Activated CD8-positive, alpha-beta memory T cell treated with anti-CD3 and anti-CD28 coated beads, Interleukin-2, amount 10 ng/mL, durations not matched to agents 7 days and 5 days (primary cell): ENCODE measurements at regions of chr1 and their contacts with region 1.

Region 1: DNA sequence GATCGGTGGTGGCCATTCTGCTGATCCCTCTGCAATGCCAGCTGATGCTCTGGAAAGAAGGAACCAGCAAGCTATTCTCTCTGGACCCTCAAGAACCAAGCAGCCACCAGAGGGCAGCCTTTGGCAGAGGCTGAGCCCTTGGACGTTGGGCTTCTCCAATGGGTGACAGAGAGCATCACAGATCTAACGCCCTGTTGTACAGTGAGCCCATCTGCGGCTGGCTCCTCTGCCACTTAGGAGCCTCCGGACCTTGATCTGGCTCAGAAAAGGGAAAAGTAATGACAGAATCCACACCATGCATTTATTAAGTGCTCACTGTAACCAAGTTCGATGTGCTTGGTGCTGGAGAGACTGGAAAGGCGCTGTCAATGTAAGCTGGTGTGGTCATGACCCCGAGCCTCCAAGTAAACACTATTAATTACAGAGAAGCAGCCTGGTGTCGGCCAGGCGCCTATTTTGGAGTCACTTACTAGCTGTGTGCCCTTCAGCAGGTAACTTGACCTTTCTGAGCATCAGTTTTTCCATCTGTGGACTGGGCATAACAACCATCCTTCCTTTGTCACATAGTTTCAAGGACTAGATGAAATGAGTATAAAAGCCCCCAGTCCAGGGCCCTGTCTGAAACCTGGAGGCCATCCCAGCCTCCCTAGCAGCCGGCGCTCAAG is 34.9 kb downstream of the ECE1 start:
- DNase-seq: peak; percentile 87
- ATAC-seq: peak; percentile 79
- H3K4me3 Mint-ChIP-seq: no peak overlapping the region
- H3K27ac Mint-ChIP-seq: no peak overlapping the region
- H3K4me1 Mint-ChIP-seq: peaks cover 27% of the 10 kb centered on the region
- H3K27me3 Mint-ChIP-seq: no peaks in the 10 kb centered on the region

Region 2: DNA sequence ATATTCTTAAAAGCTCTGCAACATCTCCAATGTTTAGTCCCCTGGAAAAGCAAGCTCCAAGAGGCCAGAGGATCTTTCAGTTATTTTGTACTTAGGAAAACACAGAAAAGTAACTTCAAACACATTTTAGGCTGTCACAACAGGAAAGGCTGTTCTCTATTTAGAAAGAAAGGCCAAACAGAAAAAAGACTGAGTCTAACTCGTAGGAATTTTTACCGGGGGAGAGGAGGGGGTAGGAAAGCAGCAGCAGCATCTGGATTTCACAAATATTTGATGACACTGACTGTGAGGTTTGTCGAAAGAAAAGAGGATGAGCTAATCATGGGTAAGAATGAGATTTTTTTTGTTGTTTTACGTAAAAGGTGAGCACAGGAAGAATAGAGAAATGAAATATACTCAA is 185.9 kb before region 1 on chr1:
- CTCF ChIA-PET with region 1: no interaction called
- DNase-seq: no peak
- ATAC-seq: no peak
- H3K4me3 Mint-ChIP-seq: no peak overlapping the region
- H3K27ac Mint-ChIP-seq: no peak overlapping the region
- H3K4me1 Mint-ChIP-seq: no peaks in the 10 kb centered on the region
- H3K27me3 Mint-ChIP-seq: no peaks in the 10 kb centered on the region

Region 3: GRCh38 chr1:21117597-21118001 is 137.8 kb before region 1 on chr1:
- CTCF ChIA-PET with region 1: no interaction called
- DNase-seq: no peak
- ATAC-seq: no peak
- H3K4me3 Mint-ChIP-seq: no peak overlapping the region
- H3K27ac Mint-ChIP-seq: no peak overlapping the region
- H3K4me1 Mint-ChIP-seq: peaks cover 2% of the 10 kb centered on the region
- H3K27me3 Mint-ChIP-seq: no peaks in the 10 kb centered on the region

Region 4: GRCh38 chr1:21244986-21245687 is 10.3 kb before region 1 on chr1:
- CTCF ChIA-PET with region 1: interaction called, 21 read pairs
- DNase-seq: no peak
- ATAC-seq: no peak
- H3K4me3 Mint-ChIP-seq: no peak overlapping the region
- H3K27ac Mint-ChIP-seq: no peak overlapping the region
- H3K4me1 Mint-ChIP-seq: peaks cover 2% of the 10 kb centered on the region
- H3K27me3 Mint-ChIP-seq: no peaks in the 10 kb centered on the region

Region 5: GRCh38 chr1:21294266-21294989 is 39.0 kb after region 1 on chr1:
- CTCF ChIA-PET with region 1: interaction called, 23 read pairs
- DNase-seq: peak; percentile 90
- ATAC-seq: peak; percentile 67
- H3K4me3 Mint-ChIP-seq: peak overlapping the region; percentile 73
- H3K27ac Mint-ChIP-seq: peak overlapping the region; percentile 98
- H3K4me1 Mint-ChIP-seq: peaks cover 80% of the 10 kb centered on the region
- H3K27me3 Mint-ChIP-seq: no peaks in the 10 kb centered on the region

Region 6: DNA sequence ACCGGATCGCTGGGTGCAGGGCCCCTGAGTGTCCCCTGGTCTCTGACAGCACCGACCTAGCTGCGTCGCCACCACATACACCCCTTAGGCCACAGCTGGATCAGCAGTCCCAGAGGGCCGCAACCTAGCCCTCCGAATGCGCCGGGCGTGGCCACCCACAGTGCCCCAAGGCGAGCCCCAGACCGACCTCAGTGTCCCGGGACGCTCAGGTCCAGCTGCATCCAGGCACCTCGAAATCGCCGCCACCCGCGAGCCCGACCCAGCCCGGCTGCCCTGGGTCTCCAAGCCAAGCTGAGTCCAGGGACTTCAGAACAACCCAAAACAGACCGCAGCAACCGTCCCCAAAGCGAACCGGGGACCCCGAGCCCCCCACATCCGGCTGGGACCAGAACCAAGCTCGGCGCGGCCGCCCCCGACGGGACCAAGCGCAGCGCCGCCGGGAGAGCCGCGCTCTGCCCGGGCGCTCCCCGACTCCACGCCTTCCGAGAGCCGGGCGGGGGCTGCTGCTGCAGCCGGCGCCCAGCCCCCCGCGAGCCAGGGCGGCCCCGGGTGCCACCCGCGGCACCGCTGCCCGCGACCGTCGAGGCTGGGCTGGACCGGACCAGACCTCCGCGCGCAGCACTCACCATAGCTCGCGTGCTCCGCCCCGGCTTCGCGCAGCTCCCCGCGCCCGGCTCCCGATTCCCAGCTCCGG is 89.5 kb after region 1 on chr1:
- CTCF ChIA-PET with region 1: interaction called, 14 read pairs
- DNase-seq: peak; percentile 57
- ATAC-seq: peak; percentile 24
- H3K4me3 Mint-ChIP-seq: peak overlapping the region; percentile 87
- H3K27ac Mint-ChIP-seq: peak overlapping the region; percentile 93
- H3K4me1 Mint-ChIP-seq: peaks cover 41% of the 10 kb centered on the region
- H3K27me3 Mint-ChIP-seq: no peaks in the 10 kb centered on the region

Region 7: DNA sequence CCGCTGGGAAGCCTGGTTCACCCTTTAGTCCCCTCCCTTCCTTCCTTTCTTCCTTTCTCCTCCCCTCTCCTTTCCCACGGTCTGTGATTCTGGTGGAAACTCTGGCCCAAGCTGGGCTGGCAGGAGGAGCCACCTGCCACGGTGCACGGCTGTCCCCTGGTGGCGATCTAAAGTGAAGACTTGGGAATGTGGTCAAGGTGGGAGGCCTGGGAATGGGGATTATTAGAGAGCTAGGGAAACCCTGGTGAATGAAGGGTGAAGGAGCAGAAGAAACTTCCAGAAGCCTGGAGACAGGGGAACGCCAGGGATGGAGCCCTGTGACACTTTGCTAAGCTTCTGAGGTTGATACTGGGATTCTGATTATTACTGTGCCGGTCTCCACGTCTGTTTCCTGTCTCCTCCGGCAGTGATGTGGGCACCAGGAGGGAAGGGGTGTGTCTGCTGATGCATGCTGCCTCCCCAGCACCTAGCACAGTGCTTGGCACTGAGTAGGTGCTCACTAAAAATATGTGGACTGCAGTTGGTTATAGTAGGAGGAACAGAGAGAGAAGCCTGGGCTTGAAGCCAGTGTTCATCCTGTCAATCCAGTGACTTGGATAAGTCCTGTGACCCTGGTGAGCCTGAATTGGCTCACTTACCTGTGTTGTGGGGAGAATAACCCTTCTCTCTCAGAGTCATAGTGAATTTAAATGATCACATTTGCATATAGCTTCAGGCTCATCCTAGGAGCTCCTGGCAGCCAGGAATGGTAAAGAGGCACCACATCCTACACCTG is 113.3 kb after region 1 on chr1:
- CTCF ChIA-PET with region 1: interaction called, 158 read pairs
- DNase-seq: peak; percentile 63
- ATAC-seq: peak; percentile 67
- H3K4me3 Mint-ChIP-seq: no peak overlapping the region
- H3K27ac Mint-ChIP-seq: no peak overlapping the region
- H3K4me1 Mint-ChIP-seq: peaks cover 6% of the 10 kb centered on the region
- H3K27me3 Mint-ChIP-seq: no peaks in the 10 kb centered on the region